AG04449 (cell line): ENCODE measurements at regions of chr1 and their contacts with region 1.

Region 1: GRCh38 chr1:101520302-101520701 is 283.5 kb downstream of the S1PR1 start:
- DNase-seq: no peak
- H3K4me3 ChIP-seq: no peak overlapping the region
- CTCF ChIP-seq: peak; percentile 61

Region 2: GRCh38 chr1:101506541-101507164 is 13.6 kb before region 1 on chr1:
- CTCF ChIA-PET with region 1: interaction called, 18 read pairs
- POLR2A ChIA-PET with region 1: no interaction called
- DNase-seq: no peak
- H3K4me3 ChIP-seq: no peak overlapping the region
- CTCF ChIP-seq: peak; percentile 59

Region 3: GRCh38 chr1:101567582-101568189 is 47.4 kb after region 1 on chr1:
- CTCF ChIA-PET with region 1: interaction called, 18 read pairs
- POLR2A ChIA-PET with region 1: no interaction called
- DNase-seq: no peak
- H3K4me3 ChIP-seq: no peak overlapping the region
- CTCF ChIP-seq: peak; percentile 79

Region 4: GRCh38 chr1:101653482-101653946 is 133.2 kb after region 1 on chr1:
- CTCF ChIA-PET with region 1: no interaction called
- POLR2A ChIA-PET with region 1: no interaction called
- DNase-seq: no peak
- H3K4me3 ChIP-seq: no peak overlapping the region
- CTCF ChIP-seq: no peak